ENCODE measurements at regions of chr3 and their contacts with region 1.

Region 1: GRCh38 chr3:18389108-18389733 is 35.9 kb downstream of the SATB1 start:
- DNase-seq: peak; percentile 62
- ATAC-seq: no peak
- H3K4me3 ChIP-seq: no peak overlapping the region
- H3K4me3 Mint-ChIP-seq: no peak overlapping the region
- H3K27ac ChIP-seq: no peak overlapping the region
- H3K27ac Mint-ChIP-seq: no peak overlapping the region
- H3K4me1 ChIP-seq: no peaks in the 10 kb centered on the region
- H3K4me1 Mint-ChIP-seq: no peaks in the 10 kb centered on the region
- H3K27me3 ChIP-seq: no peaks in the 10 kb centered on the region
- H3K27me3 Mint-ChIP-seq: no peaks in the 10 kb centered on the region
- CTCF ChIP-seq: peak; percentile 93

Region 2: GRCh38 chr3:17258823-17259436 is 1130.3 kb before region 1 on chr3:
- CTCF ChIA-PET with region 1: no interaction called
- POLR2A ChIA-PET with region 1: no interaction called
- intact Hi-C with region 1: loop called (anchors 5 kb)
- DNase-seq: peak; percentile 61
- ATAC-seq: no peak
- H3K4me3 ChIP-seq: no peak overlapping the region
- H3K4me3 Mint-ChIP-seq: no peak overlapping the region
- H3K27ac ChIP-seq: no peak overlapping the region
- H3K27ac Mint-ChIP-seq: no peak overlapping the region
- H3K4me1 ChIP-seq: no peaks in the 10 kb centered on the region
- H3K4me1 Mint-ChIP-seq: peaks cover 1% of the 10 kb centered on the region
- H3K27me3 ChIP-seq: no peaks in the 10 kb centered on the region
- H3K27me3 Mint-ChIP-seq: no peaks in the 10 kb centered on the region
- CTCF ChIP-seq: peak; percentile 96

Region 3: GRCh38 chr3:18405141-18405540 is 15.9 kb after region 1 on chr3:
- CTCF ChIA-PET with region 1: interaction called, 15 read pairs
- POLR2A ChIA-PET with region 1: no interaction called
- intact Hi-C with region 1: no loop called
- DNase-seq: no peak
- ATAC-seq: no peak
- H3K4me3 ChIP-seq: no peak overlapping the region
- H3K4me3 Mint-ChIP-seq: no peak overlapping the region
- H3K27ac ChIP-seq: no peak overlapping the region
- H3K27ac Mint-ChIP-seq: no peak overlapping the region
- H3K4me1 ChIP-seq: no peaks in the 10 kb centered on the region
- H3K4me1 Mint-ChIP-seq: peaks cover 5% of the 10 kb centered on the region
- H3K27me3 ChIP-seq: no peaks in the 10 kb centered on the region
- H3K27me3 Mint-ChIP-seq: no peaks in the 10 kb centered on the region
- CTCF ChIP-seq: no peak

Region 4: GRCh38 chr3:18758047-18758704 is 369.0 kb after region 1 on chr3:
- CTCF ChIA-PET with region 1: interaction called, 16 read pairs
- POLR2A ChIA-PET with region 1: no interaction called
- intact Hi-C with region 1: loop called (anchors 1 kb)
- DNase-seq: peak; percentile 84
- ATAC-seq: peak; percentile 88
- H3K4me3 ChIP-seq: no peak overlapping the region
- H3K4me3 Mint-ChIP-seq: no peak overlapping the region
- H3K27ac ChIP-seq: no peak overlapping the region
- H3K27ac Mint-ChIP-seq: no peak overlapping the region
- H3K4me1 ChIP-seq: no peaks in the 10 kb centered on the region
- H3K4me1 Mint-ChIP-seq: no peaks in the 10 kb centered on the region
- H3K27me3 ChIP-seq: no peaks in the 10 kb centered on the region
- H3K27me3 Mint-ChIP-seq: no peaks in the 10 kb centered on the region
- CTCF ChIP-seq: peak; percentile 87

Measured in B cell (primary cell).